Endothelial cell of umbilical vein (primary cell): ENCODE measurements at regions of chr14 and their contacts with region 1.

Region 1: DNA sequence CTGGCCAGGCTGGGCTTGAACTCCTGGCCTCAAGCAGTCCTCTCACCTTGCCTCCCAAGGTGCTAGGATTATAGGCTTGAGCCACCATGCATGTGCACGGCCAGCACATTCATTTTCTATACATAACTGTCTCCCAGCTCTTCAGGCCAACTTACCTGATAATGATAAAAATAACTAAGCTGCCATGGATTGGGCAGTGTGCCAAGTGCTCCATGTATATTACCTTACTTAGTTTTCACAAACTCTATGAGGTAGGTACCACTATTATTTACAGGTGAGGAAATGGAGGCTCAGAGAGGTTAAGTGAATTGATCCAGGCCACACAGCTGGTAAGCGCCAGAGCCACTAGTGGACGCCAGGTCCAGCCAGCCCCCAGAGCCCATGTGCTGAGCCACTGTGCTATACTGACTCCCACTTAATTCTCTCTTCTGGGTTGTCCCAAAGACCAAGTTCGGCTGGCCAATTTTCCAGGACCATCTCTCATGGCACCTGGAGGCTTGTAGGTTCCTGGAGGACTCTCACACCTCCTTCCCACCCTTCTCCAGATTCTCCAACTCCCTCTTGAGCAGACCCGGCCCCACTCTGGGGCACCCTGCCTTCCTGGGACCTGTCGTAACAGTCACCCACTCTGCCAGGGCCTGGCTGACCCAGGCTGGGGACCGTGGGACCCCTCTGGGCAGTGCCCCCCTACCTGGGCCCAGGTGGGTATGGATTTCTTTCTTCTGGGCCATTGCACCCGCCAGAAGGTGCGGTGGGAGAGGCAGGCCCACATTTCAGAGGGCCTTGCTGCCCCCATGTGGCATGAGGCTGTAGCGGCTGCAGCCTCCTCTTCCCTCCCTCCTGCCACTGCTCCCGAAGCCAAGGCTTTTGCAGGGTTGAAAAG is 30.2 kb upstream of the CIPC start:
- DNase-seq: peak; percentile 61
- H3K4me3 ChIP-seq: no peak overlapping the region
- H3K27ac ChIP-seq: no peak overlapping the region
- H3K4me1 ChIP-seq: no peaks in the 10 kb centered on the region
- H3K27me3 ChIP-seq: peaks cover 0 to 2% of the 10 kb centered on the region in 2 experiments
- CTCF ChIP-seq: peak; percentile 90 to 91
- POLR2A ChIP-seq: no peak

Region 2: GRCh38 chr14:76904740-76905438 is 163.0 kb before region 1 on chr14:
- CTCF ChIA-PET with region 1: interaction called, 209 read pairs
- POLR2A ChIA-PET with region 1: no interaction called
- dilution Hi-C with region 1: no loop called
- intact Hi-C with region 1: no loop called
- DNase-seq: peak; percentile 64
- H3K4me3 ChIP-seq: no peak overlapping the region
- H3K27ac ChIP-seq: no peak overlapping the region
- H3K4me1 ChIP-seq: peaks cover 12% of the 10 kb centered on the region
- H3K27me3 ChIP-seq: peaks cover 2 to 7% of the 10 kb centered on the region in 2 experiments
- CTCF ChIP-seq: no peak
- POLR2A ChIP-seq: no peak

Region 3: DNA sequence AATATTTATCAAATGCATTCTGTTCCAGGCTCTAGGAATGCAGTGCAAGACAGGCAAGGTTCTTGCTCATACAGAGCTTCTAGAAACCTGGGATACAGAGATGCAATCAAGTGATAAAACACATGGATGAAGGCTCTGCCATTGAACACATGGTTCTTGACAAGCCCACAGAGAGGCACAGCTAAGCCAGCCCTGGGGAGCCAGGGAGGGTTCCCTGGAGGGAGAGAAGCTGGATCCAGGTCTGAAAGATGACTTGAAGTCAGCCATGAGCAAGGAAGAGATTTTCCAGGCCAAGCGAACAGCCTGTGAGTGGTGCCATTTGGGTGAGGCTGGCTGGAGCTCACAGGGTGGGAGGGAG is 105.6 kb before region 1 on chr14:
- CTCF ChIA-PET with region 1: interaction called, 13 read pairs
- POLR2A ChIA-PET with region 1: no interaction called
- dilution Hi-C with region 1: no loop called
- intact Hi-C with region 1: no loop called
- DNase-seq: no peak
- H3K4me3 ChIP-seq: peak overlapping the region in 1 of 3 experiments; percentile 43
- H3K27ac ChIP-seq: peak overlapping the region; percentile 76
- H3K4me1 ChIP-seq: peaks cover 43% of the 10 kb centered on the region
- H3K27me3 ChIP-seq: no peaks in the 10 kb centered on the region
- CTCF ChIP-seq: no peak
- POLR2A ChIP-seq: no peak

Region 4: DNA sequence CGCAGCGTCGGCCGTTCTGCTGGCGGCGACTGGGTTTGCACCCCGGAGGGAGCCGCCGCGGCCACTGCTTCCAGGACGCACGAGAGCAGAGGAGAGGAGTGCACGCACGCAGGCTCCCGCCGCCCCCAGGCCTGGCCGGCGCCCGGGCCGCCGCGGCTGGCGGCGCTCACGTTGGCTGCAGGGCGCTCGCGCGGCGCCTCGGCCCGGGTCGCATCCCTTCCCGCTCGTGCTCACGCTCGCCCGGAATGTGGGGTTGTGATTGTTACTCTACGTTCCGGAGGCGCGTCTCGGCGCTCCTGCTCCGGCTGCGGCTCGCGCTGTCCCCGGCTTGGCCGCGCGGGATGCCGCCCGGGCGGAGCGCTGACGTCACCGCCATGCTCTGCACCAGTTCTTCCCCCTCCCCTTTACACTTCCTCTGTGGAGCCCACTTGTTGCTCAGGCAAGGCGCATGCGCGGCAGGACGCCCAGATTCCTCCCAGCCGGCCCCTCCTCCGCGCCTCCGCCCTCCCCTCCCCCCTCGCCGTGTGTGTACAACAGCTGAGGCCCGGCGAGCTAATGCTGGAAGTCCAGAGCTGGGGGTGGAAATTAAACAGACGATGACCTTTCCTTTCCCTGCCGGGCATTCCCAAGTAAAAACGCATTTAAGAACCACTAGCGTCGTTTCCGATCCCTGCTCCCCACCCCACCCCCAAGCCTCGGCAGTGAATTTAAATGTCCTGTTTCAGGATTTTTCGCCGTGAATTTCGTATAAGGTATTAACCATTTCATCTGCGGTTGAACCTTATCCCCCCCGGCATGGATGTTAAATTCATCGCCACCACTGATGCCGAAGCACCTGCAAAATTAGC is 39.3 kb before region 1 on chr14 and contains the start of gene IRF2BPL:
- CTCF ChIA-PET with region 1: interaction called, 25 read pairs
- POLR2A ChIA-PET with region 1: no interaction called
- dilution Hi-C with region 1: no loop called
- intact Hi-C with region 1: no loop called
- DNase-seq: peak; percentile 99
- H3K4me3 ChIP-seq: peak within 1 kb of the TSS; percentile 24 to 90 (median 54)
- H3K27ac ChIP-seq: peak within 1 kb of the TSS; percentile 93
- H3K4me1 ChIP-seq: peaks cover 48% of the 10 kb centered on the region
- H3K27me3 ChIP-seq: no peaks in the 10 kb centered on the region
- CTCF ChIP-seq: no peak
- POLR2A ChIP-seq: peak; percentile 96
- total RNA-seq, gene IRF2BPL: 23.1 and 23.3 TPM in 2 replicates

Region 5: DNA sequence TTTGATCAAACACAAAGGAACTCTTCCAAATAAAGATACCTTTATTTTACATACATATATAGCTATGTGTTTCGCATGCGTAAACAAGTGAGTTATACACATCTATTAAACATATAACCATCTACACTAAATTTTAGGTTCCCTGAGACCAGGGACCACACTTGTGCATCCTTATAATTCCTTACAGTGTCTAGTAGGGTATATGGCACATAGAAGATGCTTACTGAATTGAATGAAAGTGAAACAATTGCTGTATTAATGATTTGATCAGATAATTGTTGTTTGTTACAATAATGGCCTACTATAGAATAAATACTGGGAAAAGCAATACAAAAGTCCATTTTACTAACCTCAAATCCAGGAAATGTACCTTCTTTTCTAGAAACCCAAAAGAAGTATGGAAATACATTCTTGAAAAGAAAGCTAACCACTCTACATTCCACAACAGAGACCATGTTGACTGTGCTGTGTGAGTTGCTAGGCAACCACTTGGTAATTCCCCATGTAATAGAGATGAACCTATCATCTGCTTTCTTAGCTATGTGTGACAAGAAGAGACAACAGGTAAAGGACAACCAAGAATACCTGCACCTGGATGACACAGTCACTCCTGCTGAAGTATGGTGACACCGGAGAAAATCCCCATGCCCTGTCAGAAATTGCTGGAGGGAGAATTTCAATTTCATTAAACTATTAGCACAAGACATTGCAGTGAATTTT is 18.3 kb after region 1 on chr14:
- CTCF ChIA-PET with region 1: interaction called, 17 read pairs
- POLR2A ChIA-PET with region 1: no interaction called
- dilution Hi-C with region 1: no loop called
- intact Hi-C with region 1: no loop called
- DNase-seq: no peak
- H3K4me3 ChIP-seq: no peak overlapping the region
- H3K27ac ChIP-seq: no peak overlapping the region
- H3K4me1 ChIP-seq: no peaks in the 10 kb centered on the region
- H3K27me3 ChIP-seq: peaks cover 13 to 24% of the 10 kb centered on the region in 2 experiments
- CTCF ChIP-seq: no peak
- POLR2A ChIP-seq: no peak

Region 6: GRCh38 chr14:77141214-77142004 is 73.5 kb after region 1 on chr14 and contains the start of gene ZDHHC22:
- CTCF ChIA-PET with region 1: no interaction called
- POLR2A ChIA-PET with region 1: no interaction called
- dilution Hi-C with region 1: no loop called
- intact Hi-C with region 1: no loop called
- DNase-seq: peak; percentile 45
- H3K4me3 ChIP-seq: peak within 1 kb of the TSS in 2 of 3 experiments; percentile 6 to 34
- H3K27ac ChIP-seq: no peak within 1 kb of the TSS
- H3K4me1 ChIP-seq: peaks cover 13% of the 10 kb centered on the region
- H3K27me3 ChIP-seq: peaks cover 60 to 65% of the 10 kb centered on the region in 2 experiments
- CTCF ChIP-seq: peak; percentile 38 to 61
- POLR2A ChIP-seq: no peak
- total RNA-seq, gene ZDHHC22: 0.24 and 0.28 TPM in 2 replicates

Region 7: DNA sequence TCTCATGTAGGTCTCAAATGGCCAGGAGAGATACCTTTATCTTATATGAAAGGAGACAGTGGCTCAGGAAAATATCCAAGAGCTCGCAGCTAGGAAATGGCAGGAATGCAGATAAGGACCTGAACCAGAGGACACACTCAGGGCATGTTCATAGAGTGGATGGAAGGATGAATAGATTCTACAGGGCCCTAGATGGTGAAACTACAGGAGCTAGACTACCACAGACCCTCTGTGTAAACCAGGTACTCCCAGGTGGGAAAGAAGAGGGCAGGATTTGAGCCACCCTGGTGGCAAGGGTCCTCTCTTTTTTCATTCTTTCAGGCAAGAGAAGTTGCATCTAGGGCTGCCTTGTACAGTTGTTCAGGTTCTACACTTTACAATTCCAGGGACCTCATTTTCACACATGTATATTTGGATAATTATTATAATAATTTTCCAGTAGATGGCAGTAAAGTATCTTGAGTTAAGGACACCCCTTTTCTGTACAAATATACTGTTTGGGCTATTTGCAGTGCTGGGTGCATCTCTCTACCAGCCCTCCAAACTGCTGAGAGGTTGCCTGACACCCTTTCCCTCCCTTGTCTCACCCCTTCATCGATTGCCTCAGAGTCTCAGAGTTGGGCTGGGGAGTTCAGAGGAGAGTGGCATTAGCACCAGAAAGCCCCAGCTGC is 84.2 kb after region 1 on chr14:
- CTCF ChIA-PET with region 1: interaction called, 11 read pairs
- POLR2A ChIA-PET with region 1: no interaction called
- dilution Hi-C with region 1: no loop called
- intact Hi-C with region 1: no loop called
- DNase-seq: peak; percentile 28
- H3K4me3 ChIP-seq: no peak overlapping the region
- H3K27ac ChIP-seq: no peak overlapping the region
- H3K4me1 ChIP-seq: no peaks in the 10 kb centered on the region
- H3K27me3 ChIP-seq: peaks cover 11 to 19% of the 10 kb centered on the region in 2 experiments
- CTCF ChIP-seq: no peak
- POLR2A ChIP-seq: no peak

Region 8: GRCh38 chr14:77372304-77372841 is 304.5 kb after region 1 on chr14:
- CTCF ChIA-PET with region 1: no interaction called
- POLR2A ChIA-PET with region 1: no interaction called
- dilution Hi-C with region 1: no loop called
- intact Hi-C with region 1: no loop called
- DNase-seq: no peak
- H3K4me3 ChIP-seq: no peak overlapping the region
- H3K27ac ChIP-seq: no peak overlapping the region
- H3K4me1 ChIP-seq: peaks cover 10% of the 10 kb centered on the region
- H3K27me3 ChIP-seq: no peaks in the 10 kb centered on the region
- CTCF ChIP-seq: no peak
- POLR2A ChIP-seq: no peak